ENCODE measurements at regions of chr15 and their contacts with region 1.

Region 1: GRCh38 chr15:63402498-63403253 is 21.0 kb upstream of the CA12 start:
- DNase-seq: no peak
- H3K4me3 ChIP-seq: no peak overlapping the region
- H3K27ac ChIP-seq: no peak overlapping the region
- H3K4me1 ChIP-seq: no peaks in the 10 kb centered on the region
- H3K27me3 ChIP-seq: no peaks in the 10 kb centered on the region
- CTCF ChIP-seq: peak; percentile 58 to 68 (median 61)
- POLR2A ChIP-seq: no peak

Region 2: GRCh38 chr15:63166219-63166618 is 236.5 kb before region 1 on chr15:
- intact Hi-C with region 1: loop called in 1 of 2 experiments (anchors 10 kb)
- DNase-seq: no peak
- H3K4me3 ChIP-seq: no peak overlapping the region
- H3K27ac ChIP-seq: no peak overlapping the region
- H3K4me1 ChIP-seq: no peaks in the 10 kb centered on the region
- H3K27me3 ChIP-seq: no peaks in the 10 kb centered on the region
- CTCF ChIP-seq: peak in 2 of 6 experiments; percentile 8 to 23
- POLR2A ChIP-seq: no peak

Region 3: GRCh38 chr15:63288778-63289378 is 113.8 kb before region 1 on chr15:
- intact Hi-C with region 1: loop called (anchors 5 kb)
- DNase-seq: no peak
- H3K4me3 ChIP-seq: no peak overlapping the region
- H3K27ac ChIP-seq: no peak overlapping the region
- H3K4me1 ChIP-seq: peaks cover 14 to 16% of the 10 kb centered on the region in 2 donors
- H3K27me3 ChIP-seq: no peaks in the 10 kb centered on the region
- CTCF ChIP-seq: peak; percentile 28 to 77 (median 74)
- POLR2A ChIP-seq: no peak